H1 (cell line): ENCODE measurements at regions of chr3 and their contacts with region 1.

Region 1: GRCh38 chr3:159828542-159828943 is 160.1 kb upstream of the IL12A start:
- DNase-seq: no peak
- H3K4me3 ChIP-seq: no peak overlapping the region
- H3K27ac ChIP-seq: no peak overlapping the region
- H3K4me1 ChIP-seq: no peaks in the 10 kb centered on the region
- H3K27me3 ChIP-seq: no peaks in the 10 kb centered on the region
- CTCF ChIP-seq: peak in 2 of 3 experiments; percentile 33 to 38; a peak in 2 of 4 replicates
- EP300 ChIP-seq: no peak
- POLR2A ChIP-seq: no peak
- RAD21 ChIP-seq: peak; percentile 56 to 62

Region 2: GRCh38 chr3:159813822-159814523 is 14.6 kb before region 1 on chr3:
- CTCF ChIA-PET with region 1: interaction called, 14 read pairs
- POLR2A ChIA-PET with region 1: no interaction called
- DNase-seq: peak in 1 of 2 experiments; percentile 31
- H3K4me3 ChIP-seq: no peak overlapping the region
- H3K27ac ChIP-seq: no peak overlapping the region
- H3K4me1 ChIP-seq: peaks cover 2 to 6% (median 3%) of the 10 kb centered on the region in 4 experiments; a peak in 5 of 7 replicates
- H3K27me3 ChIP-seq: no peaks in the 10 kb centered on the region
- CTCF ChIP-seq: no peak
- EP300 ChIP-seq: no peak
- POLR2A ChIP-seq: no peak
- RAD21 ChIP-seq: no peak

Region 3: DNA sequence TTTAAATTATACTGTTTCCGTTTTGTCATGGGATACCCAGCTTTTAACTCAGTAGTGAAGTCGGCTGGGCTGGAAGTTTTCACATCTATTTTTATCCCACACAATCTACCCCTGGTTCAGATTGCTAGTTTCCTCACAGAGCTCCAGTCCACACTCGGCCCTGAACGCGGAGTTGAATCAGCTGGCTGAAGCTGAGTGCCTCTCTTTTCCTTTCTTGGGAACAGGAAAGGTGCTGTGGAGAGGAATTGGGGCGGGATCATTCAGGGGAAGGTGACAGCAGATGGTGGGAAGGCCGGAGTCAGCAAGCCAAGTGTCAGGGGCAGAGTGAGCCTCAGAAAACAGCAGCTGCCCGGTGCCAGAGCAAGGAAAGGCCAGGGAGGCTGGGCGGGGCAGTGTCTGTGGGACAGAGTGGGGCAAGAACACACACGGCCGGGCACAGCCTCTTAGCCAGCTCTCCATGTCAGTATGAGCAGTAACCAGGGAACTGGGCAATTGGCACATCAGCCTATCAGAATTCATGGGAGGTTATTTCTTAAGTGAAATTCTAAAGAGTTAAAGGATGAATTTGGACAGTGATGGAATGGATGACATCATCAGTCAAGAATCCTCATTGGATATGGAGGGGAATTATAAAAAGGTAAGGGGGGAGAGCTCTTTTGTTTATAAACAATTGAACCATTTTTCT is 24.4 kb after region 1 on chr3:
- CTCF ChIA-PET with region 1: interaction called, 20 read pairs
- POLR2A ChIA-PET with region 1: no interaction called
- DNase-seq: no peak
- H3K4me3 ChIP-seq: peak overlapping the region in 1 of 4 experiments; percentile 1; a peak in 1 of 8 replicates
- H3K27ac ChIP-seq: peak overlapping the region; percentile 51; the same call in 1 of the 2 replicates
- H3K4me1 ChIP-seq: peaks cover 0 to 10% (median 6%) of the 10 kb centered on the region in 4 experiments; a peak in 5 of 7 replicates
- H3K27me3 ChIP-seq: no peaks in the 10 kb centered on the region
- CTCF ChIP-seq: no peak
- EP300 ChIP-seq: no peak
- POLR2A ChIP-seq: 0 out of 3 replicates have a peak, but pooled peaks of 1 of the 2 experiments have one; percentile 28
- RAD21 ChIP-seq: no peak